Calu3 (cell line): ENCODE measurements at regions of chr11 and their contacts with region 1.

Region 1: DNA sequence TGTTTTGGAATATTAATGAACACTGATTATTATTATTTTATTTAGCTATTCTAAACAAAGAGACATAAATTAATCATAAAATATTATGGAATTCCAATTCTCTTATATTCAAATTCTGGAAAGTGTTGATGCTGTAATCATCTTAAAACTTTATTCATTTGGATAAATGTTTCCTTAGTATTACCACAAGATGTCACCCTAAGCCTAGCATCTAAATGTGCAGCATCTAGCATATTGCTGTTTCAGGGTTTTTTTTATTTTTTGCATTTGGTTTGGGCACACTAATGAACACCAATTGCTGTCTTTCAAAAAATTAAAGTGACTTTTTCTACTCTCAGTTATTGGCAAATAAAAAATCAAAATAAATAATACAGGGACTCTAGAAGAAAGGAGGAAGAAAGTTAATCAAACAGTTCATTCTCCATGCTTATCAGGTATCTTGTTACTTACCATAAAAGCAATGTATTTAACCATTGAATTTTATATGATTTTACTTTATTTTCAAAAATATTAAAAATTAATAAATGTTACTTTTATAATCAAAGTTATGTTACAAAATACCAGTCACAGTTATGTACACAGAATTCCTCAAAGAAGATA is 31.8 kb downstream of the DLG2 start:
- DNase-seq: no peak
- H3K4me3 Mint-ChIP-seq: no peak overlapping the region
- H3K27ac Mint-ChIP-seq: no peak overlapping the region
- H3K4me1 Mint-ChIP-seq: no peaks in the 10 kb centered on the region
- H3K27me3 Mint-ChIP-seq: no peaks in the 10 kb centered on the region
- CTCF ChIP-seq: no peak

Region 2: GRCh38 chr11:84558085-84558905 is 1037.1 kb before region 1 on chr11:
- CTCF ChIA-PET with region 1: no interaction called
- intact Hi-C with region 1: loop called (anchors 2 kb)
- DNase-seq: peak; percentile 20
- H3K4me3 Mint-ChIP-seq: no peak overlapping the region
- H3K27ac Mint-ChIP-seq: no peak overlapping the region
- H3K4me1 Mint-ChIP-seq: peaks cover 19% of the 10 kb centered on the region
- H3K27me3 Mint-ChIP-seq: peaks cover 4% of the 10 kb centered on the region
- CTCF ChIP-seq: no peak

Region 3: DNA sequence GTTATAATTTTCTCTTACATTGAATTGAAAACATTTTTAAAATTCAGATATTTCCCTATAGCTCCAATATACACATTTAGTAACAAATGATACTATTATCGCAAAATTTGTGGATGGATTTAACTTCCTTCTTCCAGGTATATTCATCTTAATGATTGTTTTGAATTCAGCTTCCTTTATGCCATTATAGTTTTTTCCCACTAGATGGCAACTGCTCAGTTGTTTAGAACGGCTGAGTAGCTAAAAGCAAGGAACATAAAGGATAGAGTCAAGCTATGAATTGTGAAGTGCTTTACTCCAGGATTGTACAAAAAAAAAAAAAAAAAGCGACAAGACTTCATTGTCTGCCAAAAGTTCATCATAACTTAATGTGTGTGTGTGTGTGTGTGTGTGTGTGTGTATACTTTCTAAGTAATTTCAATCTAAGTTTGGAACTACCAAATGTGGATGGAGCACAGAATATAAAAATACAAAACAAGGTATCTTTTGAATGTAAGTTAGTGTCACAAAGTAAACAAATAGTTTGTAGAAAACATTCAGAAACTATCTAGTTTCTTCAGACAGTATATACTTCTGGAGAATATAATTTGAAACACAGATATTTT is 814.6 kb before region 1 on chr11:
- CTCF ChIA-PET with region 1: interaction called, 3 read pairs
- intact Hi-C with region 1: loop called (anchors 2 kb)
- DNase-seq: no peak
- H3K4me3 Mint-ChIP-seq: no peak overlapping the region
- H3K27ac Mint-ChIP-seq: no peak overlapping the region
- H3K4me1 Mint-ChIP-seq: no peaks in the 10 kb centered on the region
- H3K27me3 Mint-ChIP-seq: peaks cover 13% of the 10 kb centered on the region
- CTCF ChIP-seq: no peak

Region 4: DNA sequence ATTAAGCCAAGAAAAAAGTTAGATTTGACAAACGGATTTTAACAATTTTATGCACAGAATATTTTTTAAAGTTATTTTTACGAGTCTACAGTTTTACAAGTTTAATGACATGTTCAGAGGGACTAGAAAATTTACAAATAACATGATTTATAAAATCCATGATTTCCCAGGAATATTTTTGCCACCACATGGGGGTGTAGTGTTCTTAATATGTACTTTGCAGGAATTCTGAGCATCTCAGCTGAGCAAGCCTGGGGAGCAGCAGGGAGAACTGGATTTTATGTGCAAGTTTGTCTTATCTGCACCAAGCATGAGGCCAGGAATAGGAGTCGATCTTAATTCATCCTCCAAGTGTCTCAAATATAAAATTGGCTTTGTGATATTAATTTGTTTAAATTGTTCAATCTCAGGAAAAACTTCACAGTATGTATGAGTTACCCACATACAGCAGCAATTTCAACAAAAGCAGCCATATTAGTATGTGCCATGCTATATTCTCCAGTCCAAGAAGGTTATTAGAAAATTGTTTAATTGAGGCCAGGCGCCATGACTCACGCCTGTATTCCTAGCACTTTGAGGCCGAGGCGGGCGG is 794.5 kb before region 1 on chr11:
- CTCF ChIA-PET with region 1: no interaction called
- intact Hi-C with region 1: loop called (anchors 2 kb)
- DNase-seq: peak; percentile 6
- H3K4me3 Mint-ChIP-seq: no peak overlapping the region
- H3K27ac Mint-ChIP-seq: no peak overlapping the region
- H3K4me1 Mint-ChIP-seq: no peaks in the 10 kb centered on the region
- H3K27me3 Mint-ChIP-seq: peaks cover 27% of the 10 kb centered on the region
- CTCF ChIP-seq: no peak

Region 5: DNA sequence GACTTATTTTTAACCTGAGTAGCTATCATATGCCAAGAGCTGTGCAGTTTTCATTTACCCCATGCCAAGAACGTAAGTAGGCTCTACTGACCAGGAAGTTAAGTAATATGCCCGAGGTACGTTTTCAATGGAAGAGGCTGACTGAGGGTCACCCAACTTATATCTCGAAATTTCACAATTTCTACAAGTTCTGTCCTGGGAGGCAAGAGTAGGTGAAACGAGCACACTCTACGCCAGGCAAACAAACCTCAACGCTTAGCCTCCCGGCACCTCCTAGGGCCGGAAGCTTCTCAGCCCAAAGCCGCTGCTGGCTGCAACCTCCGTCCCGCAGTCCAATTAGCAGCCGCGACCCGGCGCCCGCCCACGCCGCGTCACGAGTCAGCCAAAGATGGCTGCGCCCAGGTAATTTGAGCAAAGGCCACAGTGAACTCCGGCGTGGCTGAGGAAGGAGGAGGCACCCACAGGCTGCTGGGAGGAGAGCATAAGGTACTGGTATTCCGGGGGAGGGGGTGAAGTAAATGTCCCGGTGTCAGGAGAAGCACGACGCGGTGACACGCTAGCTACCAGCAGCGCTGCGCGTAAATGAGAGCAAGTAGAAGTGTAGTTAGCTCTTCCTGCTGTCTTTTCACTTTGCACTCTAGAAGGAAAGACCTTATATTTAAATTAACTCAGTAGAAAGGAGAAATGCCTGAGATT is 52.4 kb after region 1 on chr11 and contains the start of gene TMEM126A:
- CTCF ChIA-PET with region 1: no interaction called
- intact Hi-C with region 1: loop called (anchors 5 kb)
- DNase-seq: peak; percentile 89
- H3K4me3 Mint-ChIP-seq: peak within 1 kb of the TSS; percentile 85
- H3K27ac Mint-ChIP-seq: peak within 1 kb of the TSS; percentile 88
- H3K4me1 Mint-ChIP-seq: no peaks in the 10 kb centered on the region
- H3K27me3 Mint-ChIP-seq: no peaks in the 10 kb centered on the region
- CTCF ChIP-seq: no peak
- total RNA-seq, gene TMEM126A: 20.9 and 22.9 TPM in 2 replicates

Region 6: GRCh38 chr11:85664615-85665481 is 69.5 kb after region 1 on chr11 and contains the start of gene CREBZF:
- CTCF ChIA-PET with region 1: no interaction called
- intact Hi-C with region 1: loop called (anchors 5 kb)
- DNase-seq: peak; percentile 91
- H3K4me3 Mint-ChIP-seq: peak within 1 kb of the TSS; percentile 87
- H3K27ac Mint-ChIP-seq: peak within 1 kb of the TSS; percentile 76
- H3K4me1 Mint-ChIP-seq: no peaks in the 10 kb centered on the region
- H3K27me3 Mint-ChIP-seq: no peaks in the 10 kb centered on the region
- CTCF ChIP-seq: no peak
- total RNA-seq, gene CREBZF: 31.0 and 31.2 TPM in 2 replicates

Region 7: GRCh38 chr11:85844426-85845129 is 249.2 kb after region 1 on chr11:
- CTCF ChIA-PET with region 1: no interaction called
- intact Hi-C with region 1: loop called (anchors 10 kb)
- DNase-seq: peak; percentile 51
- H3K4me3 Mint-ChIP-seq: no peak overlapping the region
- H3K27ac Mint-ChIP-seq: peak overlapping the region; percentile 78
- H3K4me1 Mint-ChIP-seq: peaks cover 13% of the 10 kb centered on the region
- H3K27me3 Mint-ChIP-seq: no peaks in the 10 kb centered on the region
- CTCF ChIP-seq: no peak